CD4-positive, alpha-beta T cell (primary cell): ENCODE measurements at regions of chr14 and their contacts with region 1.

Region 1: GRCh38 chr14:22653012-22653621 is 9.0 kb upstream of the OR6J1 start:
- DNase-seq: peak; percentile 20 to 75 (median 37)
- ATAC-seq: peak; percentile 90
- H3K4me3 ChIP-seq: no peak overlapping the region
- H3K4me3 Mint-ChIP-seq: no peak overlapping the region
- H3K27ac ChIP-seq: no peak overlapping the region
- H3K27ac Mint-ChIP-seq: no peak overlapping the region
- H3K4me1 ChIP-seq: no peaks in the 10 kb centered on the region
- H3K4me1 Mint-ChIP-seq: no peaks in the 10 kb centered on the region
- H3K27me3 ChIP-seq: no peaks in the 10 kb centered on the region
- H3K27me3 Mint-ChIP-seq: no peaks in the 10 kb centered on the region
- CTCF ChIP-seq: peak; percentile 69

Region 2: GRCh38 chr14:22122227-22122818 is 530.8 kb before region 1 on chr14:
- CTCF ChIA-PET with region 1: no interaction called
- POLR2A ChIA-PET with region 1: no interaction called
- intact Hi-C with region 1: loop called in 1 of 2 experiments (anchors 10 kb)
- DNase-seq: peak in 5 of 14 experiments; percentile 10 to 60 (median 41)
- ATAC-seq: peak; percentile 46
- H3K4me3 ChIP-seq: peak overlapping the region; percentile 45
- H3K4me3 Mint-ChIP-seq: peak overlapping the region; percentile 75
- H3K27ac ChIP-seq: peak overlapping the region in 1 of 2 donors; percentile 59
- H3K27ac Mint-ChIP-seq: peak overlapping the region; percentile 96
- H3K4me1 ChIP-seq: no peaks in the 10 kb centered on the region
- H3K4me1 Mint-ChIP-seq: peaks cover 21% of the 10 kb centered on the region
- H3K27me3 ChIP-seq: no peaks in the 10 kb centered on the region
- H3K27me3 Mint-ChIP-seq: no peaks in the 10 kb centered on the region
- CTCF ChIP-seq: no peak

Region 3: DNA sequence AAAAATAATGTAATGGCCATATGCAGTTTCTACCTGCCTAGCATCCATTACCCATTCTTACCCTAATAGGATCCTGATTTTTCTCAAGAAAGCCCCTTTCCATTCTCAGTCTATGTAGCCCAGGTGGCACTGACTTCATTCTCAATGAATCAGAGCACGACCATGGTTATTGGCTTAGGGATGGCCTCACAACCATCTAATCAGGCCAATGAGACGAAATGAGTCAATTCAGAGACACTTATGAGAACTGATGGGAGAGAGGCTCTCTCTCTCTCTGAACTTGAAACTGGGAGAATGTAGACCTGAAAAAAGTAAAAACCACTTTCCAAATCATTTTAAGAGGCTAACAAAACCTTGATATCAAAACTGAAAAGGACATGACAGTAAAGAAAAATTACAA is 68.1 kb after region 1 on chr14:
- CTCF ChIA-PET with region 1: no interaction called
- POLR2A ChIA-PET with region 1: no interaction called
- intact Hi-C with region 1: no loop called
- DNase-seq: no peak
- ATAC-seq: no peak
- H3K4me3 ChIP-seq: no peak overlapping the region
- H3K4me3 Mint-ChIP-seq: no peak overlapping the region
- H3K27ac ChIP-seq: no peak overlapping the region
- H3K27ac Mint-ChIP-seq: no peak overlapping the region
- H3K4me1 ChIP-seq: no peaks in the 10 kb centered on the region
- H3K4me1 Mint-ChIP-seq: no peaks in the 10 kb centered on the region
- H3K27me3 ChIP-seq: peaks cover 0 to 2% of the 10 kb centered on the region in 2 experiments
- H3K27me3 Mint-ChIP-seq: peaks cover 7% of the 10 kb centered on the region
- CTCF ChIP-seq: no peak

Region 4: GRCh38 chr14:22900081-22900799 is 247.1 kb after region 1 on chr14:
- CTCF ChIA-PET with region 1: no interaction called
- POLR2A ChIA-PET with region 1: no interaction called
- intact Hi-C with region 1: loop called in 1 of 2 experiments (anchors 5 kb)
- DNase-seq: peak in 13 of 14 experiments; percentile 14 to 87 (median 36)
- ATAC-seq: peak; percentile 92
- H3K4me3 ChIP-seq: no peak overlapping the region
- H3K4me3 Mint-ChIP-seq: no peak overlapping the region
- H3K27ac ChIP-seq: no peak overlapping the region
- H3K27ac Mint-ChIP-seq: no peak overlapping the region
- H3K4me1 ChIP-seq: peaks cover 13% of the 10 kb centered on the region
- H3K4me1 Mint-ChIP-seq: peaks cover 15% of the 10 kb centered on the region
- H3K27me3 ChIP-seq: no peaks in the 10 kb centered on the region
- H3K27me3 Mint-ChIP-seq: no peaks in the 10 kb centered on the region
- CTCF ChIP-seq: peak; percentile 68